ENCODE measurements at regions of chr7 and their contacts with region 1.

Region 1: DNA sequence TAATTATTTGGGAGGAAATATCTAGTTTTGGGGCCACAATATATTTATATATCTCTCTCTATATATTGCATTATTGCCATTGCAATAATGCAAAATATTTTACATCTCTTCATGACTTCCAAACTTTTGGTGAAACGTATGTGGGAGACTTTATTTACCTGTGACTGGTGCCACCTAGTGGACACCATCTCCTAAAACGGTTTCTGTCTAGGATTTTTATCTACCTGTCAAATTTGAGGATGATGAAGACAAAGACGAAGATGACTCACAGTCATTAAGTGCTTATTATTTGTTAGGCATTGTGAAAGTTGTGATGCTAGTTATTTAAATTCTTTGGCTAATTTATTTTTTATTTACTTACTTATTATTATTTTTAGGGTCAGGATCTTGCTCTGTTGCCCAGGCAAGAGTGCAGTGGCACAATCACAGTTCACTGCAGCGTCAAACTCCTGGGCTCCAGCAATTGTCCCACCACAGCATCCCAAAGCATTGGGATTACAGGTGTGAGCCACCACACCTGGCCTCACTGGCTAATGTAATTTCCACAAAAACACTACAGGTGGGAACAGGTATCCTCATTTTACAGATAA is 18.7 kb upstream of the CBLL1 start:
- H3K4me3 Mint-ChIP-seq: no peak overlapping the region
- H3K27ac Mint-ChIP-seq: no peak overlapping the region
- H3K4me1 Mint-ChIP-seq: no peaks in the 10 kb centered on the region
- H3K27me3 Mint-ChIP-seq: peaks cover 7% of the 10 kb centered on the region

Region 2: DNA sequence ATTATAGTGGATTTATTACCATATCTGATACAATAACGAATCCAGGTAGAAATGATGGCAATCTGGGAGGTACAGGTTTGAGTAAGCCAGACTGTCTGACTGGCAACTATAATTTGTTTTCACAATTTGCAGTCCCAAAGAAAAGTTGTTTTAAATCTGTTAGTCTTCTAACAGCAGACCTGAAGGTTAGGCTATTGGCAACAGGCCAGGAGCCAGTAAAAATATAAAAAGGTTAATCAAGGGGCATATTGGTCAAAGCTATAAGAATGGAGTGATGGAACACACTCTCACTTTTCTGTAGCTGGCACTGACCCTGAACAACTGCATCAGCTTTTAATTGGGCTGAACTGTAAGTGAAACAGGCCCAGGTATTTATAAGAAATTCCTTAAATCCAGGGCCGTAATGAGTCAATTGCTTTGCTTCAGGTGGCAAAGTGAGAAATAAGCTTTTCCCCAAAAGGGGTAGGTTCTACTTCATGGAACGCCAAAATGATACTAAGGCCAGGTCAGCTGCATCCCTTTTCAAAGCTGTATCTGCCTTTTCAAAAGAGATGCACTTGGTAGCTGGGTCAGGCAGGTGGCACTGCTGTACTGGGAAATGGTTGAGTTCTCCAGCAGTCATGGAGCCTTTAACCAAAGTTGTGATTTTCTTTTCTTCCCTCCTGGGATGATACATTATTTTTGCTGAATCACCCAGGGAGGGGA is 262.4 kb before region 1 on chr7:
- intact Hi-C with region 1: loop called (anchors 1 kb)
- H3K4me3 Mint-ChIP-seq: no peak overlapping the region
- H3K27ac Mint-ChIP-seq: no peak overlapping the region
- H3K4me1 Mint-ChIP-seq: no peaks in the 10 kb centered on the region
- H3K27me3 Mint-ChIP-seq: no peaks in the 10 kb centered on the region

Measured in dendritic cell treated with granulocyte-macrophage colony-stimulating factor and Interleukin-4, amounts not matched to agents 40 ng/mL and 50 ng/mL, for 4 days (primary cell).